ENCODE measurements at regions of chr1 and their contacts with region 1.

Region 1: GRCh38 chr1:226634166-226634588 is 85.6 kb downstream of the STUM start:
- DNase-seq: peak; percentile 84
- H3K4me3 ChIP-seq: no peak overlapping the region
- H3K27ac ChIP-seq: peak overlapping the region; percentile 59 to 68 (median 66)
- H3K4me1 ChIP-seq: peaks cover 7 to 43% (median 19%) of the 10 kb centered on the region in 4 donors
- H3K27me3 ChIP-seq: no peaks in the 10 kb centered on the region
- CTCF ChIP-seq: peak; percentile 94 to 96 (median 94)
- EP300 ChIP-seq: no peak
- POLR2A ChIP-seq: no peak

Region 2: GRCh38 chr1:226337276-226337875 is 296.8 kb before region 1 on chr1:
- in situ Hi-C with region 1: no loop called
- intact Hi-C with region 1: no loop called
- DNase-seq: no peak
- H3K4me3 ChIP-seq: no peak overlapping the region
- H3K27ac ChIP-seq: no peak overlapping the region
- H3K4me1 ChIP-seq: peaks cover 0 to 5% (median 2%) of the 10 kb centered on the region in 4 donors
- H3K27me3 ChIP-seq: no peaks in the 10 kb centered on the region
- CTCF ChIP-seq: no peak
- EP300 ChIP-seq: no peak
- POLR2A ChIP-seq: no peak

Region 3: GRCh38 chr1:226697151-226697939 is 63.2 kb after region 1 on chr1:
- in situ Hi-C with region 1: no loop called
- intact Hi-C with region 1: loop called (anchors 10 kb)
- DNase-seq: no peak
- H3K4me3 ChIP-seq: no peak overlapping the region
- H3K27ac ChIP-seq: peak overlapping the region; percentile 51 to 68 (median 66)
- H3K4me1 ChIP-seq: peaks cover 14 to 52% (median 32%) of the 10 kb centered on the region in 4 donors
- H3K27me3 ChIP-seq: no peaks in the 10 kb centered on the region
- CTCF ChIP-seq: no peak
- EP300 ChIP-seq: no peak
- POLR2A ChIP-seq: no peak

Region 4: DNA sequence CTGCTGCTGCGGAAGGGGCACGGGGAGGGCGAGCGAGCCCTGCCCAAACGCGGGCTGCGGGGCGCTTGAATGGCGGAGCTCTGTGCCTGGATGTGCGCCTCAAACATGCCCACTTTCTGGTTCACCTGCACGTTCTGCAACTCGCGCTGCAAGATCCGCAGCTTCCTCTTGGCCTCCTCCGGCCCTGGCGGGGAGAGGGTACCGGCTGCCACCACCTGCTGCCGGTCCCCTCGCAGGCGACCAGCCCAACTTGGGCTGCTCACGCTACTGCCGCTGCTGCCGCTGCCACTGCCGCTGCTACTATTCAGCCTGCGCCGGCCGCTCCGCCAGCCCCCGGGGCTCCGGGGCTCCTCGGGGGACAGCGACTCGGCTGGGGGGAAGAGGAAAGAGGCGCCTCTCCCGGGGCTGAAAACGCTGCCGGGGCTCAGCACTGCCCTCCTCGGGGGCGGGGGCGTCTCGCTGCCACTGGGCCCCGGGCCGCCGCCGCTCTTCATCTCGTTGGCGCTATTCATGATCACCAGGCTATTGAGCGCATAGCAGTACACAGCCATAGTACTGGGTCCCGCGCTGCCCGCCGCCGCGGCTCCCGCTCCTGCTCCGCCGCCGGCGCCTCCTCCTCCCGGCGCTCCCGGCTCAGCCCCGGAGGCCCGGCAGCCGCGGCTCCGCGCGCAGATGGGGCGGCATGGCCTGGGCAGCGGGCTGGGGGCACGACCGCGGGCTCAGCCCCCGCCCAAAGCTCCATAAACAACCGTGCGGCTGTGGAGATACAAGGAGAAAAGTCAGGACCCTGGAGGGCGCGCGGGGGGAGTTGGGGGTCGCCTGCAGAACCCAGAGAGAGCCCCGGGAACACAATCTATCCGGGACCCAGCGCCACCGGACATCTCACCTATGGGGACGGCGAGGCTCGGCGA is 103.0 kb after region 1 on chr1:
- in situ Hi-C with region 1: no loop called
- intact Hi-C with region 1: loop called (anchors 2 kb)
- DNase-seq: peak; percentile 39
- H3K4me3 ChIP-seq: peak overlapping the region; percentile 66 to 96 (median 82)
- H3K27ac ChIP-seq: peak overlapping the region; percentile 90 to 97 (median 94)
- H3K4me1 ChIP-seq: peaks cover 10 to 51% (median 32%) of the 10 kb centered on the region in 4 donors
- H3K27me3 ChIP-seq: no peaks in the 10 kb centered on the region
- CTCF ChIP-seq: peak in 1 of 5 experiments; percentile 7
- EP300 ChIP-seq: no peak
- POLR2A ChIP-seq: no peak

Region 5: DNA sequence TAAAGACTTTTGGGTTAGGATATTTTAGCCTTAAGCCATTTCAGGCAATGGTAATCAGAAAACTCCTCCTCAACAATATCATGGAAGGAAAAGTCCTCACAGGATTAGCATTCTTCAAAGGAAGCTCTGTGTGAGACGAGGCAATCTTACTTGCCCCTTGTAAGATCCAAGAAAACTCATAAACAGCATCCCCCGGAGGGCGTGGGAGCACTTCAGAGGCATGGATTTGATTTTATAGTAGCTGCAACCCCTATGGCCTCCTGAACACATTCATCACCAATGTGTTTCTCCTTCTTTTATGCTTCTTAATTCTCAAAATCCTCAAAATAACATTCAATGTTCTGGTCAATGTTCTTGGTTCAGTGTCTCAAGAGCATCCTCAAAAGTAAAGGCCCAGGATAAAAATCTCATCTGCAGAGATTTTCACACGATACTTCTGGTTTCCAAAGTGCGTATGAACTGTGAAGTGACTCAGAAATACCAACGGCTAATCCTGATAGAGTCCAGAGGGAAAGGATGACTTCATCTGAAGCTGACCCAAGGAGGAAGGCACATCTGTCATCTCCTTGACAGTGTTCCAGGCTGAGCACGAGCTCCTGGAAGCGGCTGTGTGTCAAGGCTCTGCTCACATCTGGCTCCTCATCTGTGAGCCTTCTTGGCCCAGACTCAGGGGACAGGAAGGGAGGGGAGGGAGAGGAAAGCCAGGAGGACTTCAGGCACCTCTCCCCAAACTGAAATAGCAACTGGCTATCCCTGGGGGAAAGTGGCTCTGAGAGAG is 187.0 kb after region 1 on chr1:
- in situ Hi-C with region 1: loop called in 3 of 4 experiments (anchors 5 to 10 kb)
- intact Hi-C with region 1: loop called (anchors 5 kb)
- DNase-seq: peak; percentile 72
- H3K4me3 ChIP-seq: no peak overlapping the region
- H3K27ac ChIP-seq: peak overlapping the region; percentile 76 to 86 (median 84)
- H3K4me1 ChIP-seq: peaks cover 5 to 10% (median 8%) of the 10 kb centered on the region in 4 donors
- H3K27me3 ChIP-seq: no peaks in the 10 kb centered on the region
- CTCF ChIP-seq: no peak
- EP300 ChIP-seq: peak; percentile 97
- POLR2A ChIP-seq: no peak

Region 6: GRCh38 chr1:226827968-226828513 is 193.9 kb after region 1 on chr1:
- in situ Hi-C with region 1: loop called in 3 of 4 experiments (anchors 5 to 10 kb)
- intact Hi-C with region 1: loop called (anchors 5 kb)
- DNase-seq: peak; percentile 96
- H3K4me3 ChIP-seq: peak overlapping the region in 1 of 4 donors; percentile 19
- H3K27ac ChIP-seq: peak overlapping the region; percentile 77 to 86 (median 84)
- H3K4me1 ChIP-seq: peaks cover 8 to 17% (median 13%) of the 10 kb centered on the region in 4 donors
- H3K27me3 ChIP-seq: no peaks in the 10 kb centered on the region
- CTCF ChIP-seq: peak; percentile 93 to 98 (median 95)
- EP300 ChIP-seq: no peak
- POLR2A ChIP-seq: no peak

Region 7: DNA sequence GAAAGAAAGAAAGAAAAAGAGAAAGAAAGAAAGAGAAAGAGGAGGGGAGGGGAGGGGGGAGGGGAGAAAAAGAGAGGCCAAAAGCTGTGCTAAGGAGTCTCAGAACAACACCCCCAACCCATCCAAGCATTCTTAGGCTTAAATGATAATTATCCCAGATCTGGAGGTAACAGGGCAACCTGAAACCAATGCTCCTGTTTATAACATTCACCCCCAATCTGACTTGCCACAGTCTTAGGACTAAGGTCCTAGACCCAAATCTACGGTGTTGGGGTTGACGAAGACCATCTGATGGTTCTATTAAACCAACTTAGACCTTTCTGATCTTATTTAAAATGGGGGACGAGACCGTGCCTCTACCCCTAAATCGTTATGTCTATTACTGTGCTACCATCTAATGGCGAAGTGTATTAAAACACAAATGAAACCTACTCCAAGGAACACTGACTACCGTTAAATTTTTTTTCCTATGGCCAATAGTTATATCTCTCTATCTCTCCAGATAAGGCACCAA is 803.4 kb after region 1 on chr1:
- in situ Hi-C with region 1: loop called in 1 of 4 experiments (anchors 25 kb)
- intact Hi-C with region 1: no loop called
- DNase-seq: no peak
- H3K4me3 ChIP-seq: peak overlapping the region in 2 of 4 donors; percentile 19 to 43
- H3K27ac ChIP-seq: no peak overlapping the region
- H3K4me1 ChIP-seq: peaks cover 0 to 5% (median 2%) of the 10 kb centered on the region in 4 donors
- H3K27me3 ChIP-seq: no peaks in the 10 kb centered on the region
- CTCF ChIP-seq: peak; percentile 31 to 60 (median 41)
- EP300 ChIP-seq: no peak
- POLR2A ChIP-seq: no peak